IMR-90 (cell line): ENCODE measurements at regions of chr15 and their contacts with region 1.

Region 1: DNA sequence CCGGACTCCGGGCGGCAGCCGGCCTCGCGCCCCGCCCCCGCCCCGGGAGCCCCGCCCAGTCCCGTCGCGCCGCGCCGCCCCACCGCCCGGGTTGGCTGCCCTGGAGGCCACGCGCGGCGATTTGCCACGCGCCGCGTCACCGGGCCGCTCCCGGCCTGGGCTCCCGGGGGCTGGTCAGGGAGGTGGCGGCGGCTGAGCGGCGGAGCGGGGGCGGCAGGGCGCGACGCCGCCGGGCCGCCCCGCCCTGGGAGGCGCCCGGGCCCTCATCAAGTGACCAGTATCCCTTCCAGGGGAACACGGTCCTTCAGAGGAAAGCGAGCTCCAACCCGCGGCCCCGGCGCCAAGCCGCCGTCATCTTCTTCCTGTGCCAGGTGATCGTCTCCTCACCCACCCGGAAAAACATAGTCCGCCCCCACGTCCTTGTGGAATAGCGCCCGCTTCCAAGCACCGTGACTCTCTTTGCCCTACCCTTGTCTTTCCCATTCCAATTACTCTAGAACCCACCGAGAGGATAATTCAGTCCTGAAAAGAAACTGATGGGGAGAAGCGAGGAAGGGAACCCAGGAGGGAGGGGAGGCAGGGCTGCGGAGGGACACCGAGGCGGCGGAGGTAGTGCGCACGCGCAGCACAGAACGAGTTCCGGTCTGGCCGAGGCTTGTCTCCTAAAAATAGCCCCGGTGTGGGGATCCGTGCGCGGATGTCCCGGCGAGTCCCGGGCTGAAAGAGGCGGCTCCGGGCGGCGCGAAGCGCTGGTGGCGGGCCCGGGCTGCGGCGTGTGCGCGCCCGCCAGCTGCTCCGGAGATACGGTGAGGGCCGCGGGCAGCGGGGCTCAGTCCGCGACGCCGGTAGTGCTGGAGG is at the start of gene MEF2A:
- DNase-seq: peak; percentile 93
- ATAC-seq: peak; percentile 81
- H3K4me3 ChIP-seq: peak within 1 kb of the TSS; percentile 75
- H3K27ac ChIP-seq: peak within 1 kb of the TSS; percentile 91
- H3K4me1 ChIP-seq: peaks cover 4% of the 10 kb centered on the region
- H3K27me3 ChIP-seq: peaks cover 4% of the 10 kb centered on the region; the same call in 1 of the 2 replicates
- CTCF ChIP-seq: 0 out of 2 replicates have a peak, but pooled peaks have one; percentile 6
- POLR2A ChIP-seq: peak; percentile 70
- RAD21 ChIP-seq: no peak
- total RNA-seq, gene MEF2A: 16.7 and 20.8 TPM in 2 replicates

Region 2: DNA sequence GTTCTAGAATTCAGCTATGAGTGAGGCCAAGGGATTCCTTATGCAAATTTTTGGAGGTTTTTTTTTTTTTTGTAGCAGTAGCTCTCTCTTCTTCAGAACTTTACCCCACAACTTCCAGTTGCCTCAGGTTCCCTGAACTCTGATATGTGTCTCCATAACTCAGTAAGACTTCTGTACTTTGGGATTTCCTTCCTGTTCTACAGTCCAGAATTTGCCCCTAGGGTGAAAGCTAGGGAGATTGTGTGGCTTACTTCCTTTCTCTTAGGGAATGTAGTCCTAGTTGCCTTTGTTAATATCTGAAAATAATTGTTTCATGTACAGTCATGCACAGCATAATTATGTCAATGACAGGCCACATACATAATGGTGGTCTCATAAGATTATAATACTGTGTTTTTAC is 283.4 kb before region 1 on chr15:
- CTCF ChIA-PET with region 1: no interaction called
- POLR2A ChIA-PET with region 1: no interaction called
- dilution Hi-C with region 1: no loop called
- in situ Hi-C with region 1: no loop called
- intact Hi-C with region 1: loop called (anchors 2 kb)
- DNase-seq: no peak
- ATAC-seq: no peak
- H3K4me3 ChIP-seq: no peak overlapping the region
- H3K27ac ChIP-seq: no peak overlapping the region
- H3K4me1 ChIP-seq: no peaks in the 10 kb centered on the region; the same call in 1 of the 2 replicates
- H3K27me3 ChIP-seq: no peaks in the 10 kb centered on the region
- CTCF ChIP-seq: no peak
- POLR2A ChIP-seq: no peak
- RAD21 ChIP-seq: no peak

Region 3: DNA sequence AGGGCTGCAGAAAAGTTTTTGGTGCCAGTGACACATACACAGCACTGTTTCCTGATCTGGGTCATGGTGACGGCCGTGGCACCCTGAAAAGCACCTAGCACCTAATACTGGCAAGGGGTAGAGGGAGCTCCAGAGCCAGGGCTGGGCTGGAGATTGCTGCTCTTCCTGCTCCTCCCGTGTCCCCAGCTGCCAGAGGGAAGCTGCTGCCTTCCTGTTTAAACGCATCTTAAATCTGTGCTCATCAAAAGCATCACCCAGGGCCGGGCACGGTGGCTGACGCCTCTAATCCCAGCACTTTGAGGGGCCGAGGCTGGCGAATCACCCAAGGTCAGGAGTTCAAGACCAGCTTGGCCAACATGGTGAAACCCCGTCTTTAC is 156.4 kb before region 1 on chr15:
- CTCF ChIA-PET with region 1: no interaction called
- POLR2A ChIA-PET with region 1: no interaction called
- dilution Hi-C with region 1: no loop called
- in situ Hi-C with region 1: no loop called
- intact Hi-C with region 1: loop called (anchors 2 kb)
- DNase-seq: peak; percentile 60
- ATAC-seq: peak; percentile 61
- H3K4me3 ChIP-seq: no peak overlapping the region
- H3K27ac ChIP-seq: no peak overlapping the region
- H3K4me1 ChIP-seq: peaks cover 10% of the 10 kb centered on the region
- H3K27me3 ChIP-seq: no peaks in the 10 kb centered on the region
- CTCF ChIP-seq: peak; percentile 60
- POLR2A ChIP-seq: no peak
- RAD21 ChIP-seq: peak; percentile 76

Region 4: GRCh38 chr15:99442252-99442897 is 123.2 kb before region 1 on chr15:
- CTCF ChIA-PET with region 1: no interaction called
- POLR2A ChIA-PET with region 1: no interaction called
- dilution Hi-C with region 1: no loop called
- in situ Hi-C with region 1: no loop called
- intact Hi-C with region 1: loop called (anchors 5 kb)
- DNase-seq: peak; percentile 90
- ATAC-seq: peak; percentile 89
- H3K4me3 ChIP-seq: no peak overlapping the region
- H3K27ac ChIP-seq: peak overlapping the region; percentile 88
- H3K4me1 ChIP-seq: peaks cover 14% of the 10 kb centered on the region
- H3K27me3 ChIP-seq: no peaks in the 10 kb centered on the region
- CTCF ChIP-seq: no peak
- POLR2A ChIP-seq: no peak
- RAD21 ChIP-seq: no peak

Region 5: GRCh38 chr15:99454941-99455788 is 110.4 kb before region 1 on chr15:
- CTCF ChIA-PET with region 1: no interaction called
- POLR2A ChIA-PET with region 1: no interaction called
- dilution Hi-C with region 1: no loop called
- in situ Hi-C with region 1: no loop called
- intact Hi-C with region 1: loop called (anchors 2 kb)
- DNase-seq: peak; percentile 98
- ATAC-seq: peak; percentile 98
- H3K4me3 ChIP-seq: no peak overlapping the region
- H3K27ac ChIP-seq: peak overlapping the region; percentile 88
- H3K4me1 ChIP-seq: peaks cover 33% of the 10 kb centered on the region
- H3K27me3 ChIP-seq: no peaks in the 10 kb centered on the region
- CTCF ChIP-seq: no peak
- POLR2A ChIP-seq: peak; percentile 64; the same call in 1 of the 2 replicates
- RAD21 ChIP-seq: peak; percentile 26

Region 6: GRCh38 chr15:99476413-99477222 is 88.9 kb before region 1 on chr15:
- CTCF ChIA-PET with region 1: no interaction called
- POLR2A ChIA-PET with region 1: no interaction called
- dilution Hi-C with region 1: no loop called
- in situ Hi-C with region 1: no loop called
- intact Hi-C with region 1: loop called (anchors 1 kb)
- DNase-seq: peak; percentile 100
- ATAC-seq: peak; percentile 92
- H3K4me3 ChIP-seq: peak overlapping the region; percentile 5; the same call in 1 of the 2 replicates
- H3K27ac ChIP-seq: peak overlapping the region; percentile 92
- H3K4me1 ChIP-seq: peaks cover 24% of the 10 kb centered on the region
- H3K27me3 ChIP-seq: no peaks in the 10 kb centered on the region
- CTCF ChIP-seq: no peak
- POLR2A ChIP-seq: peak; percentile 47; the same call in 1 of the 2 replicates
- RAD21 ChIP-seq: peak; percentile 36; the same call in 1 of the 2 replicates